Right ventricle myocardium inferior (tissue), 1 donor: ENCODE measurements at regions of chr6 and their contacts with region 1.

Region 1: DNA sequence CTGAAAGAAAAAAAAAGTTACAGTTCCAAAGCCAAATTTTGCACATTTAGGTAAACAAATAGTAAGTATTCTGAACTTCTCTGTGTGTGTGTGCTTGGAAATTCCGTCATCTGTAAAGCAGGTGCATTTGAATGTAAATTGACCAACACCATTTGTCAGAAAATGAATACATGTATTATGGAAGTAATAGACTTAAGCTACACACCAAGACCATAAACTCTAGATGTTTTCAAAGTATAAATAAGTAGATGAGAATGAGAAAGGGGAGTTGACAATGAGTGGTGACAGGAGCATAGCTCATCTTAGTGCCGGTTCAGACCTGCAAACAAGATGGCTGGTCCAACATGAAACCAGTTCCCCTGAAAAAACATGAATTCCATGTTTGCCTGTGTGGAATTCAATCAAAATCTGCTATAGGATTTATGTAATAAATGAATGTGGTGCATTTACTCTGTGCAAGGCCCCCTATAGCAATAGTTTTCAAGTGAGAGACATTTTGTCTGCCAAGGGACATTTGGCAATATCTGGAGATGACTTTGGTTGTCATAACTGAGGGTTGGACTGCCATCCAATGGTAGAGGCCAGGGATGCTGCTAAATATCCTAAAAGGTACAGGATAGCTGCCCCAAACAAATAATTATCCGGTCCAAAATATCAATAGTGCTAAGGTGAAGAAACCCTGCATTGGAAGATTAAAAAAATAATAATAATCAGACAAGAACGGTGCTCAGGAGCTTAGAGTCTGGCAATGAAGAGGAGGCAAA is 11.0 kb upstream of the FILIP1 start:
- DNase-seq: no peak
- ATAC-seq: peak; percentile 83

Region 2: GRCh38 chr6:75266716-75267291 is 237.8 kb before region 1 on chr6:
- intact Hi-C with region 1: loop called (anchors 5 kb)
- DNase-seq: no peak
- ATAC-seq: peak; percentile 65

Region 3: DNA sequence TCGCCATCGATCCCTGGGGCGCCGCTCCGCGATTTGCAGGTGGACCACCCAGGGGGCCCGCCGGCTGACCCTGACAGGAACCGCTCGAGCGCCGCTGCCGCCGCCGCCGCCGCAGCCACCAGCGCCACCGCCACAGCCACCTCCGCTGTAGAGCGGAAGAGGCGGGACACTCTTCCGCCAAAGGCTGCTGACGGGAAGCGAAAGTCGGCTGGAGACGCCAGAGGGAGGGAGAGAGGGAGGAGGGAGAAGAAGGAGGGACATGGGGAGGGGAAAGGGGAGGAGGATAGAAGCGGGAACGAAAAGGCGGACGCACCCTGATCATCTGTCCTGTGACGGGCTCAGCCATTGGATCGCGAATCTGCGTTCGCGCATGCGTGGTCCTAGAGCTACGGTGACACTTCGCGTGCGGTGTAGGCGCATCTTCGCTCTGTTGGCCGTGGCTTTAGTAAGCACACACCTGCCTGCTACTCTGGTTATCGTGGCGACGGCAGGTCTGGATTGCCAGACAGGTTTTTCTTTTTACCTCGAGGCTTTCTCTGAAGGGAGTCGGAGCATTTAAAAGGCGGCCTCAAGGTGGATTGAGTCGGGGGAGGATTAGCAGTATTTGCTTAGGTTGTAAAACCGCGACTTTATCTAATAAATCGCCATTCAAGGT is 219.9 kb before region 1 on chr6 and contains the start of gene TMEM30A:
- intact Hi-C with region 1: no loop called
- DNase-seq: peak; percentile 98
- ATAC-seq: peak; percentile 100
- total RNA-seq, gene TMEM30A: 45.2 TPM

Region 4: DNA sequence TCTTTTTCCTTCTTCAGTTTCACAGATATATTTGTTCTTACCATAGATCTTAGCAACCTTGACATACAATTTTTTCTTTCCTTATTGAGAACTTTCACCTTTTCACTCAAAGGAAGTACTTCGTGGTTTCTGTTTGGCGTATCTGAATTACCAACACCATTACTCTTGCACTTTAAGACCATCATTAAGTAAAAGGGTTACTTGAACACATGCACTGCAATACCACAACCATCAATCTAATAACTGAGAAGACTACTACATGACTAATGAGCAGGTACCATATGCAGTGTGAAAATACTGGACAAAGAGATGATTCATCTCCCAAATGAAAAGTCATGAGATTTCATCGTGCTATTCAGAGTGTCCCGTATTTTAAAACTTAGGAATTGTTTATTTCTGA is 75.3 kb after region 1 on chr6:
- intact Hi-C with region 1: no loop called
- DNase-seq: no peak
- ATAC-seq: no peak